Left cardiac atrium (tissue), 4 donors: ENCODE measurements at regions of chr12 and their contacts with region 1.

Region 1: GRCh38 chr12:46413368-46413767 is 40.8 kb upstream of the SLC38A2 start:
- DNase-seq: no peak
- ATAC-seq: no peak

Region 2: GRCh38 chr12:46082490-46083200 is 330.7 kb before region 1 on chr12:
- intact Hi-C with region 1: no loop called
- DNase-seq: no peak
- ATAC-seq: no peak

Region 3: DNA sequence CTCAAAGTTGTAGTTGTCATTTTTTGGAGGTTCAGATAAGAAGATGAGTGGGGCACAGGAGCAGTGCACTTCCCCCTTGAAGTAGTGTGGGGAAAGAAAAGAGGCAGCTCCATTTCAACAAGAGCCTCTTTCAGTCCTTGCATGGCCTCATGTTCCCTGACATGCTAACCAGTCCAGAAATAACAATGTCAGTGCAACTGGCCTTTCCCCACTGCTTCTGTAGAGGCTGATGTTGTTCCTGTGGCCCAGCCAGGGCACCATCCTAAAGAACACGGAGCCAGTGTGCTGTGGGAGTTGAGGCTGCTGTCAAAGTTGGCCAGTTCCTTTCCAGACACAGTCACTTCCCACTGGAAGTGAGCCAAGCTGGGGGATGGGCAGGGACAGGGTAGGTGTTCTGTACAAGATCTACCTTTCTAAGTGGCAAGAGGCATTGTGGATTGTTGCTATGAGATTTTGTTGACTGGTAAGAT is 36.9 kb after region 1 on chr12:
- intact Hi-C with region 1: loop called in 1 of 2 experiments (anchors 2 kb)
- DNase-seq: peak; percentile 77
- ATAC-seq: peak; percentile 80 to 86